ENCODE measurements at regions of chr1 and their contacts with region 1.

Region 1: DNA sequence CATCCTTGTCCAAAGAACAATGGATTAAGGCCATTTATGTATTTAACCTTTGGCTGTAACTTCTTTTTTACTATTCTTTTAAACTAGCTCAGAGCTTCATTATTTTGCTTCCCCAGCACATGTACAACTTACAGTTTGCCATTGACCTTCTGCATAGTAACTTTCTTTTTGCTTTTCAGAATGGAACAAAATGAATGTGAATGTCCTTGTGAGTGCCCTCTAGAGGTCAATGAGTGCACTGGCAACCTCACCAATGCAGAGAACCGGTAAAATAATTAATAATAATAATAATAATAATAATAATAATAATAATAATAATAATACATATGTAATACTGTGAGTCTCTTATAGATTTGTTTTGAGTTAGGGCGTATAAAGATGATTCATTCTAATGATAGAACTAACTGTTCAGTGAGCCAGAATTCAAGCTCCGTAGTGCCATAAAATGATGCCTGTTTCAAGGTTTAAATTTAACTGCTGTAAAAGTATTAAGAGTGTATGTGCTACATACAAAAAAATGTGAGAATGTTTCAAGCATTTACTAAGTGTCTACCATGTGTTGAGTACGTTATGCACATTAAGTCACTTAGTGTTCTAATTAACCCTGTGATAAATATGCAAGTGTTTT is 69.0 kb upstream of the RAVER2 start:
- DNase-seq: no peak

Region 2: DNA sequence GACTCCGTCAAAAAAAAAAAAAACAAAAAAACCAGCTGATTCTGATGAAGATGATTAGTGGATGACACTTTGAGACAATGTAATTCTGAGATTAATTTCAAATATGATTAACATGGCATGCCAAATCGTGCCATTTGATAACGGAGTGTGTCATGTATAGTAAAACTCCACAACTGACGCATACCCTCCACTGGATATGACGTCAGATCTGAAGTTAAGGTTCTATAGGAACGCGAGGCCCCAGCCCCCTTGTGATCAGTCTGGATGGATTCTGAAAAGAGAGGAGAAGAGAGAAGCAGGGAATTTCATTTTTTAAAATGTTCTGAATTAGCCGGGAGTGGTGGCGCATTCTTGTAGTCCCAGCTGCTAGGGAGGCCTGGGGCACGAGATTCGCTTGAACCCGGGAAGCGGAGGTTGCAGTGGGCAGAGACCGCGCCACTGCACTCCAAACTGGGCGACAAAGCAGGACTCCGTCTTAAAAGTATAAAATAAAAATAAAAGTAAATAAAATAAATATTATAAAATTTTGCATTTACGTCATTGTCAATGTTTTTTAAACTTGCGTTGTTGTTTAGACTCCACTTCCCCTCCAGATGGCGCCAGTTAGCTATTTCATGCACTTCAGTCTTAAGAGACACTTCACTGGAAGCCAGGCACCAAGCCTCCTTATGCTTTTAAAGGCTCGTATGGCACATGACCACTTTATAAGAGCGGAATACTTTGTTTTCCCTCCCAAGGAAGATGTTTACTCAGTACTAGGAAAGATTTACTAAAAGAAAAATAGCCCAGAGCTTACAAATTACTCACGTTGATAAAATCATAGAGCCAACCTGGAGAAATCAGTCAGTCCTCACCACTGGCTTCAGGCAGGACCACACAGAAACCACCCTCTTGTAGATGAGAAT is 406.9 kb before region 1 on chr1:
- intact Hi-C with region 1: loop called in 1 of 2 experiments (anchors 5 kb)
- DNase-seq: no peak

Region 3: DNA sequence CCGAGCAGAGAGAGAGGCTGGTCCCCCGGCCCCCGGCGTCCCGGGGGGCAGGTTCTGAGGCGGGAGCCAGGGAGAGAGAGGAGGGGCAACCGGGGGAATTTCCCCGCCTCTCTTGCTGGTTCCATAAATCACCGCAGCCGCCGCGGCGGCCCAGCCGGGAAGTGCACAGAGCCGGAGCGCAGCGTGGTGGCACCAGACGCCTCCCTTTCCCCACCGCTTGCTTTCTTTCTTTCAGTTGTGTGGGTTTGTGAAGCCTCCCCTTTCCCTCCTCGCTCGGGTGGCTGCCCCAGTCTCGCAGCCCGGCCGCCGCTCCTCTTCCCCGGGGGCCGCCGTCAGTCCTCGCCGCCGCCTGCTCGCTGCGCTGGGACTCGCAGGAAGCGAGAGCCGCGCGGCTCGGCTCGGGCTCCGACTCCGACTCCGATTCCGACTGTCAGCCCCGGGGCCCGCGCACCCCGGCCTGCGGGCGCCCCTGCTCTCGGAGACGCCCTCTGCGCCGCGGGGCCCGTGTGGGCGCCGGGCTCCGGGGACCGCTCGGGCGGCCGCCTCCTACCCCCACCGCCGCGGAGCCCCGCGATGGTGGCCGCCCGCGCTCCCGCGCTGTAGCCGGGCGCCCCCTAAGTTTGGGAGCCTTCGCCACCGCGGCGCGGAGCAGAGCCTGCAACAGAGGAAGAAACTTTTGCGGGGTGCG is 205.7 kb before region 1 on chr1 and contains the start of gene CACHD1:
- intact Hi-C with region 1: loop called in 1 of 2 experiments (anchors 5 kb)
- DNase-seq: peak; percentile 93
- total RNA-seq, gene CACHD1: 6.9 to 12.3 TPM

Region 4: DNA sequence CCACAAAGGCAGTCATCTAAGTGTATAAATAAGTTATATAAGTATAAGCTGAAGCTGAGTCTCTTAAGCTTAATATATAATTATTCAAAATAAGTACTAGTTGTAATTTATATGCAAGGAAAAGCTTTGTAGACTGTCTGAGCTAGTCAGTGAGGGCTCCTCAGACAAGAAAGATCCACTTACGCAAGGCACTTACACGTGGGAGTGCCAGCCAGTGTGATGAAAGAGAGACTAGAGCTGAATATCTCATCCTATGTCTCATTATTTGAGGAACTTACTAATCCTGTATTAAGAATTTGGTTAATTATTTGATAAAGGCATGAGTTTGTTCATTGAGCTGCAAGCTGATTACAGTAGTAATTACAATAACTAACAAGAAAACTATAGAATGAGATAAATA is 1263.8 kb after region 1 on chr1:
- intact Hi-C with region 1: no loop called
- DNase-seq: no peak